Mammary epithelial cell (primary cell): ENCODE measurements at regions of chr2 and their contacts with region 1.

Region 1: DNA sequence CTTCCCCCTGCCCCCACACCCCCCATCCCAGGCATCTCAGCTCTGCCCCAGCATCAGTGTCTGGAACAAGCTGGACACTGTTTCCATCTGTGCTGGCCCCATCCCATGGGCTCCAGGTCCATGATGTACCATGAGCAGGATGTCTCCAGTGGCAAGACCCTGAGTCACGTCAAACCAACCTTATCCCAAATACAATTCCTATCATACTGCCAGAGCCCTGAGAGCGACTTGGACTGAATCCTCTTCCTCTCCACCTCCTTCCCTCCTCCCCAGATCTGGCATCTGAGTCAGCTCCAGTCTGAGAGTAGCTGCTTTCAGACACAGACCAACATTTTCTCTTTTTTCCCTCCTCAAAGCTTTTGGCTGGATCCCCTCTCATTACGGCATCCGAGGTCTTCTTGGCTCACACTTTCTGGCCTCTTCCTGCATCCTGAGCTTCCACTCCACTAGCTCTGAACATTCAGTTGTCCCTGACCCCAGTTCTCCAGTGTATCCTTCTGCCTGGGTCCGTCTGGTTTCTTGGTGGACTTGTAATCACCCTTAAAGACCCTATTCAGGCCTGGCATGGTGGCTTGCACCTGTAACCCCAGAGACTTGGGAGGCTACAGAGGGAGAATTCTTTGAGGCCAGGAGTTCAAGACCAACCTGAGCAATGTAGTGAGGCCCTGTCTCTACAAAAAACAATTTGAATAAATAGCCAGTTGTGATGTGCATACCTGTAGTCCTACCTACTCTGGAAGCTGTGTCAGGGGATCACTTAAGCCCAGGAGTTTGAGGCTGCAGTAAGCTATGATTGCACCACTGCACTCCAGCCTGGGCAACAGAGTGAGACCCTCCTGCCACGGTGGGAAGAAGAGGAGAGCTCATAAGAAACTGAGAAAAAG is 68.3 kb downstream of the ACKR3 start:
- DNase-seq: no peak
- H3K4me3 ChIP-seq: no peak overlapping the region
- H3K27ac ChIP-seq: no peak overlapping the region
- H3K4me1 ChIP-seq: no peaks in the 10 kb centered on the region
- H3K27me3 ChIP-seq: no peaks in the 10 kb centered on the region
- CTCF ChIP-seq: no peak

Region 2: DNA sequence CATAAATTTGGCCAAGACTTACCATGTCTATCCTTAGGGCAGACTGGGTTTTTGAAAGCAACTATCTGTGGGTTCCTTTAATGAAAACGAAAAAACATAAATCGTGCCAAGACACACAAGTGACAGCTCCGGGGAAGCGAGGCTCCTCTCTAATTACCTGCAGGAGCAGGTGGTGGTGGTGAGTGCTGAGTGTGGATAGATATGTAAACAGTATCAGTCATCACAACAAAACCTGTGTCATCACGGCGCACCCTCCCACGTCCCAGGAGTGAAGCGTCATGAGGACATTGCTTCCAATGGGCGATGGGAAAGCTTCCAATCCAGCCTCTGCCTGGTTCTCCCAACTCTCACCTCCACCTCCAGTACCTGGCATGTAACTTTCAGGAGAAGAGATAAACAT is 37.0 kb before region 1 on chr2:
- CTCF ChIA-PET with region 1: no interaction called
- dilution Hi-C with region 1: loop called (anchors 5 kb)
- in situ Hi-C with region 1: no loop called
- intact Hi-C with region 1: no loop called
- DNase-seq: peak; percentile 84
- H3K4me3 ChIP-seq: no peak overlapping the region
- H3K27ac ChIP-seq: no peak overlapping the region
- H3K4me1 ChIP-seq: no peaks in the 10 kb centered on the region
- H3K27me3 ChIP-seq: no peaks in the 10 kb centered on the region
- CTCF ChIP-seq: no peak

Region 3: GRCh38 chr2:236731878-236732580 is 94.1 kb after region 1 on chr2:
- CTCF ChIA-PET with region 1: no interaction called
- dilution Hi-C with region 1: no loop called
- in situ Hi-C with region 1: no loop called
- intact Hi-C with region 1: no loop called
- DNase-seq: peak; percentile 48
- H3K4me3 ChIP-seq: no peak overlapping the region
- H3K27ac ChIP-seq: no peak overlapping the region
- H3K4me1 ChIP-seq: peaks cover 10% of the 10 kb centered on the region
- H3K27me3 ChIP-seq: no peaks in the 10 kb centered on the region
- CTCF ChIP-seq: no peak